ENCODE measurements at regions of chr1 and their contacts with region 1.

Region 1: GRCh38 chr1:46527474-46528296 is 23.8 kb downstream of the KNCN start:
- DNase-seq: peak; percentile 85

Region 2: GRCh38 chr1:46425726-46426125 is 102.0 kb before region 1 on chr1:
- CTCF ChIA-PET with region 1: no interaction called
- POLR2A ChIA-PET with region 1: no interaction called
- DNase-seq: no peak

Region 3: DNA sequence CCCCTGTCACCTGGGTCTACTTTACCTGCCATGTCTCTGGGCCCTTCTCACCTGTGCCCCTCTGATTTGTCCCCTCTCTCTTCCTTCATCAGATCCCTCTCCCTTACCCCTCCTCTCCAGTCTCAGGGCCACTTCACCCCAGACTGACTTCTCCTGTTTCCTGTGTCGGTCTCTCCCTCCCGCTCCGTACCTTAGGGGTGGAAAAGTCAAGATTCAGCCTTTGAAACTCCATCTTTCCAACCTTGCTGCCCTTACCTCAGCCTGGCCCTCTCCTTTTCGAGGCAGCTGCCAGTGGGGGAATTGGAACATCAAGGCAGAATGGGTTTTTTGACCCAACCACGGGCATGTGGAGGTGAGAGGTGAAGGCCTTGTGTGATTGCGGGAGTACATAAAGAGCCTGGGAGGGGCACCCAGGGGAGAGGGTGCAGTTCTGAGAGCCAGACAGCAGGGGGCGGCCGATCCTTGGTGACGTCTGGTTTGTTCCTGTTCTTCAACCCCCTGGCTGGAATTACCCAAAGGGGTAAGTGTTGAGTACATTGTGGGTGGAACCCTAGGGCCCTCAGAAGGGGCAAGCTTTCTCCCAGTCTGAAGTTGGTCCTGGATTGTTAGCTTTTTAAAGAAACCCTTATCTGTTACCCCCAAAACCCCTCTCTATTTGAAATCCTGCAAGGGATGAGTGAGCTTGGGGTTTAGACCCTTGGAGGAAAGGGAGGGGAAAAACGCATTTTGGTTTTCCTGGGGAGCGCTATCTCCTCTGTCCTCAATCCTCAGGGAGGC is 50.3 kb before region 1 on chr1:
- CTCF ChIA-PET with region 1: interaction called, 40 read pairs
- POLR2A ChIA-PET with region 1: no interaction called
- DNase-seq: peak; percentile 84